Stomach (tissue), 19 donors: ENCODE measurements at regions of chr1 and their contacts with region 1.

Region 1: GRCh38 chr1:36150296-36151132 is 1.2 kb upstream of the TRAPPC3 start:
- DNase-seq: peak; percentile 94 to 96
- H3K4me3 ChIP-seq: peak overlapping the region in 3 of 4 donors; percentile 7 to 15 (median 11)
- H3K27ac ChIP-seq: peak overlapping the region; percentile 90 to 98 (median 97)
- H3K4me1 ChIP-seq: peaks cover 40 to 68% (median 52%) of the 10 kb centered on the region in 4 donors
- H3K27me3 ChIP-seq: no peaks in the 10 kb centered on the region
- CTCF ChIP-seq: no peak
- EP300 ChIP-seq: no peak
- POLR2A ChIP-seq: no peak

Region 2: DNA sequence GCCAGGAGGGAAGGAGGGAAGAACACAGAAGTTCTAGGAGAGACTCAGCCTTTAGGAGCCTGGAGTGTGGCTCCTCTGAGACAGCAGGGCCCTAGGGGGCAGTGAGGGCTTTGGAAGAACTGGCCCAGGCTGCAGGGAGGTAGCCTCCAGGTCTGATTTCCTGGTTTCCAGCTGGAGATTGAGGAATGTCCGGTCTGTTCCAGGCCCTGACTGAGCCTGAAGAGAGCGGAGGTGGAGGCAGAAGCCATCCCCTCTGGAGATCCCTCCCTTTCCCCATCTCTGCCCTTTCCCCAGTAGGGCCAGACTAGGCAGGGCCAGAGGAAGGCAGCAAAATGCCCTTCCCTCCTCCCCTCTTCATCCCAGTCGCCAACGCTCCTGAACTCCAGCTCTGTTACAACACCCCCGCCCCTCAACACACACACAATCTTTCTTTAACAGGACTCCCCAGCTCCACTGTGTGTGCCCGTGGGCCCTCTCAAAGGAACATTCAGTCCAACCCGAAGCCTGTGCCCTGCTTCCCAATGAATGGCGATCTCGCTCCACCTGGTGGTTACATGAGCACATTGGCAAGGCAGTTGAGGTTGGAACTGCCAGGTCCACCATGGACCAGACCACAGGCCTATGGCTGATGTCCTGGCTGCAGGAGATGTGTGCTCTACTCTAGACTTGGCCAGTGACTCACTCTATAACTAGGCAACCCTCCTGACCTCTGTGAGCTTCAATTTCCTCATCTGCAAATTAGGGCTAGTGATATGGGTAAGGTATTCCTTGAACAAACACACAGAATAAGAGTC is 37.5 kb after region 1 on chr1:
- intact Hi-C with region 1: loop called (anchors 5 kb)
- DNase-seq: peak; percentile 88 to 95
- H3K4me3 ChIP-seq: no peak overlapping the region
- H3K27ac ChIP-seq: peak overlapping the region; percentile 71 to 88 (median 81)
- H3K4me1 ChIP-seq: peaks cover 7 to 28% (median 15%) of the 10 kb centered on the region in 4 donors
- H3K27me3 ChIP-seq: no peaks in the 10 kb centered on the region
- CTCF ChIP-seq: peak in 6 of 7 experiments; percentile 22 to 98 (median 83)
- EP300 ChIP-seq: no peak
- POLR2A ChIP-seq: no peak

Region 3: GRCh38 chr1:36366091-36366661 is 215.7 kb after region 1 on chr1:
- intact Hi-C with region 1: no loop called
- DNase-seq: peak in 1 of 2 donors; percentile 90
- H3K4me3 ChIP-seq: no peak overlapping the region
- H3K27ac ChIP-seq: peak overlapping the region in 4 of 5 donors; percentile 46 to 75 (median 61)
- H3K4me1 ChIP-seq: peaks cover 11 to 54% (median 43%) of the 10 kb centered on the region in 4 donors
- H3K27me3 ChIP-seq: no peaks in the 10 kb centered on the region
- CTCF ChIP-seq: no peak
- EP300 ChIP-seq: no peak
- POLR2A ChIP-seq: no peak